Motor neuron (in vitro differentiated cells): ENCODE measurements at regions of chr16 and their contacts with region 1.

Region 1: DNA sequence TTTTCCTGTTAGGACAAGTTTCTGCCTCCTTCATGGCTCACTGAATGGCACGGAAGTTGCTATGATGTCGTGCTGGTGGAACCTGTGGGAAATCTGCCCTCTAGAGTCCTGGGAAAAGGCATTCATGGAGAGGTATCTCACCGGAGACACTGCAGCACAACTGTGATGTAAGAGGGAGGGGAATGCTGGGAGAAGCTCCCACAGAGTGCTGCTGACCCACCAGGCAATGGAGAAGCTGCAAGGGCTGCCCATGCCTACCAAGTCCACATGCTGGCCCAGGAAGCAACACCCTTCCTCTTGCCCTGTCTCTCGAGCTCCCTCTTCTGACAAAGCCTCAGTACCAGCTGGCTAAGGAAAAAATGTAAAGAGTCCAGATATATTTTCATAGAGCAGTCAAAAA is 45.2 kb upstream of the SLC5A11 start:
- ATAC-seq: peak in 6 of 8 experiments; percentile 19 to 59 (median 32)
- H3K4me3 ChIP-seq: no peak overlapping the region
- H3K27ac ChIP-seq: no peak overlapping the region
- H3K4me1 ChIP-seq: no peaks in the 10 kb centered on the region

Region 2: GRCh38 chr16:24430945-24431760 is 369.4 kb before region 1 on chr16:
- in situ Hi-C with region 1: no loop called
- ATAC-seq: peak; percentile 80 to 99 (median 96)
- H3K4me3 ChIP-seq: no peak overlapping the region
- H3K27ac ChIP-seq: no peak overlapping the region
- H3K4me1 ChIP-seq: no peaks in the 10 kb centered on the region

Region 3: GRCh38 chr16:24568392-24568791 is 232.2 kb before region 1 on chr16:
- in situ Hi-C with region 1: loop called in 3 of 9 experiments (anchors 25 kb)
- ATAC-seq: no peak
- H3K4me3 ChIP-seq: no peak overlapping the region
- H3K27ac ChIP-seq: no peak overlapping the region
- H3K4me1 ChIP-seq: no peaks in the 10 kb centered on the region

Region 4: DNA sequence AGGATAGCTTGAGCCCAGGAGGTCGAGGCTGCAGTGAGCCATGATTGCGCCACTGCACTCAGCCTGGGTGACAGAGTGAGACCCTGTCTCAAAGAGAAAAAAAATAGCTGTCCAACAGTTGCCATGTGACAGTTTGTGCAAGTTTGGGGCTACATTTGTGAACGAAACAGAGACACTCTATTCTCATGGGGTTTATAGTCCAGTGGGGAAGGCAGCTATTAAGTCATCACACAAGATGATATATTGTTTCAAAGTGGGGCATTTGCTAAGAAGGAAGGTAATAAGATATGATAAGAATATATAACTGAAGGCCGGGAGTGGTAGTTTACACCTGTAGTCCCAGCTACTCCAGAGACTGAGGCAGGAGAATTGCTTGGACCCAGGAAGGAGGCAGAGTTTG is 187.9 kb before region 1 on chr16:
- in situ Hi-C with region 1: no loop called
- ATAC-seq: no peak
- H3K4me3 ChIP-seq: no peak overlapping the region
- H3K27ac ChIP-seq: no peak overlapping the region
- H3K4me1 ChIP-seq: peaks cover 9 to 10% of the 10 kb centered on the region in 2 donors